ENCODE measurements at regions of chr11 and their contacts with region 1.

Region 1: GRCh38 chr11:36265793-36266628 is 23.2 kb downstream of the COMMD9 start:
- DNase-seq: peak; percentile 59
- H3K4me3 Mint-ChIP-seq: no peak overlapping the region
- H3K27ac Mint-ChIP-seq: no peak overlapping the region
- H3K4me1 Mint-ChIP-seq: peaks cover 1% of the 10 kb centered on the region
- H3K27me3 Mint-ChIP-seq: peaks cover 15% of the 10 kb centered on the region

Region 2: DNA sequence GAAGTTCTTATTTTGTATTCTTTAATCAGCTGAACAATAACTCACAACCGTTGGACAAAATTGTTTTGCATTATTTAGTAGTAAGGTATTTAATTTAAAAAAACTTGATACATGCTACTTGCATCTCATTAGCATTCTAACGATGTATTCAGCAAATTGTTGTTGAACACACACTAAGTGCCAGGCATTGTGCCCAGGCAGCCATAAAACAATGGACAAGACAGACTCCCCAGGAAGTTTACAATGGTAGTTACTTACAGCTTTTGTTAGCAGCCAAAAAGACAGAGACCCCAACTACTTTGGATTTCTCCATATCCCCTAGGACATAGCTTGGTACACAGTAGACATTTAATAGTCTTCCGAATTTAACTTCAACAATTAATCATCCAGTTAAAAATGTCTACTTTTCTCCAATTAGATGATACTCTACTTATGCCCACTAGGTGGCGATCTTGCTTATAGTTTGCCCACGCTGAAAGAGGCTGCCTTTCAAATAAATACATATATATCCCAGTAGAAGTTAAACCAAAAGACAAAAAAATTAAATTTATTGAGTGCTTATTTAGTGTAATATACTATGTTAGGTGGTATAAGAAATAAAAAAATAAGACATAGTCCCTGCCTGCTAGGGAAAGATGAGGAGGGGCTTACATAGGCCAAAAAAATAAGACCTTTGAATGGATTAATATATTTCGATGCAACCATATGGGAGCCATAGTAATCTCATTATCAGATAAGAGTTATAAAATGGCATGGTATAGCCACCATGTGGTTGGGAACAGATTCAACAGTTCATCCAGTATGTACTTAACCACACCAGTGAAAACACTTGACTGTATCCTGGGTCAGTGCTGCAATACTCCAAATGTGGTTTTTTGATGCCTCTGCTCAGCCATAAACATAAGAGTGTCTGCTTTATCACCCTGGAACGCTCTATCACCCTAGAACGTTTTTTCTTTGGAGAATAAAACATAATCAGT is 649.8 kb before region 1 on chr11:
- CTCF ChIA-PET with region 1: interaction called, 12 read pairs
- POLR2A ChIA-PET with region 1: interaction called, 3 read pairs
- DNase-seq: no peak
- H3K4me3 Mint-ChIP-seq: no peak overlapping the region
- H3K27ac Mint-ChIP-seq: no peak overlapping the region
- H3K4me1 Mint-ChIP-seq: peaks cover 8% of the 10 kb centered on the region
- H3K27me3 Mint-ChIP-seq: peaks cover 51% of the 10 kb centered on the region

Region 3: DNA sequence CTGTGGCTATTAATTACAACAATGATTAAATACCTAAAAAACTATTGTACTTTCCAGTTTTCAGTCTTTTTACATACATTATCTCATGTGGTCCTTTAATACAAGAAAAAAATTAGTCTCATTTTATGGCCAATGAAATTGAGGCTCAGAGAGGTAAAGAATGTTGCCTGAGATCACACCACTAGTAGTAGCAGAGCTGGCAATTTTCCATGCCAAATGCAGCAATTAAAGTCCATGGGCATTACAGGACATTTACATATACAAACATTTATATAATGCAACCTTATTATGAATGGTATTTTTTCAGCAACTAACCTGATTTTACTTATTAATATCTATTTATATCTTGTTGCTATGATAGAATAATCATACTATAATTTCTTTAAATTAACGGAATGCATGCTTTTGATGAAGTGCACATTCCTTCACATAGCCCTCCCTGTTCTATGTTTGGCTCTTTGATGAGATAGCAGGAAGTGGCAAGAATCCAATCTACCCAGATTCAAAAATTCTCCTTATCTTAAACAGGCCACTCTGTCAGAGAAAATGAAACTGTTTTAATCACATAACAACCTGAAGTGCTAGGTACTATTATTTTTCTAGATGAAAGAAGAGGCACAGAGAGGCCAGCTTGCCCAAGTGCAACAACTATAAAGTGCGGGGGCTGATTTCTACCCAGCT is 443.1 kb before region 1 on chr11:
- CTCF ChIA-PET with region 1: interaction called, 18 read pairs
- POLR2A ChIA-PET with region 1: no interaction called
- DNase-seq: no peak
- H3K4me3 Mint-ChIP-seq: no peak overlapping the region
- H3K27ac Mint-ChIP-seq: no peak overlapping the region
- H3K4me1 Mint-ChIP-seq: peaks cover 3% of the 10 kb centered on the region
- H3K27me3 Mint-ChIP-seq: no peaks in the 10 kb centered on the region

Region 4: GRCh38 chr11:36041988-36042611 is 223.9 kb before region 1 on chr11:
- CTCF ChIA-PET with region 1: interaction called, 15 read pairs
- POLR2A ChIA-PET with region 1: no interaction called
- DNase-seq: no peak
- H3K4me3 Mint-ChIP-seq: no peak overlapping the region
- H3K27ac Mint-ChIP-seq: no peak overlapping the region
- H3K4me1 Mint-ChIP-seq: no peaks in the 10 kb centered on the region
- H3K27me3 Mint-ChIP-seq: peaks cover 10% of the 10 kb centered on the region

Region 5: GRCh38 chr11:36131721-36132397 is 134.2 kb before region 1 on chr11:
- CTCF ChIA-PET with region 1: no interaction called
- POLR2A ChIA-PET with region 1: no interaction called
- DNase-seq: no peak
- H3K4me3 Mint-ChIP-seq: no peak overlapping the region
- H3K27ac Mint-ChIP-seq: no peak overlapping the region
- H3K4me1 Mint-ChIP-seq: no peaks in the 10 kb centered on the region
- H3K27me3 Mint-ChIP-seq: peaks cover 14% of the 10 kb centered on the region

Region 6: DNA sequence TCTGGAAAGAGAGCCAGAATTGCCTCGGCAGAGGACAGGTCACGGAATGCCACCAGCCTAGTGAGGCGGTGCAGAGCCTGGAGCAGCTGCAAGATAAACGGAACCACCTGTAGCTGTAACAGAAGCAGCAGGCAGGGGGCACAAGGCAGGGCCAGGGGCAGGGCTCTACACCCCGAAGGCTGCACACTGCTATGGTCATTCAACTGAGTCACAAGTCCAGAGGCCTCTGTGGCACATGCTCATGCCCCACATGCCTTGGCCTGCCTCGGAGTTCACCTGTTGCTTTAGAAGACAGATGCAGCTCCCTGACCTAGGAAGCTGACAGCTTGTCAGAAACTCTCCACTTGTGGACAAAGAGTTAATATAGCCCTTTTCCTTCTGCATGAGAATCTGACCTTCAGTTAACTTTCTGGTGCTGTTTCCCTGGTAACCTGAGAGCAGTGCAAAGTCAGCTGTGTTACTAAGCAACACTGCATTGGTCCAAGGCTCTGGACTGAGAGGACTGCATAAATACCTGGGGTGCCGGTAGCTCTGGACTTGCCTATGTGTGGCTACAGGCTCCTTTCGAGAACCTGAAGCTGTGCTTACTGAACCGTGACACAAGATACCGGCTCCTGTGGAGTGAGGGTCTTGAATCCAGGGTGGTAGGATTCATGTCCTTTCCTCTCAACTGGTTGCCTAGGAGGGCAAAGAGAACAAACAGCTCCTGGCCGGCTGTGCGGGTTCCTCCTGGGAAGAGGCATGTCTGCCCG is 12.7 kb after region 1 on chr11:
- CTCF ChIA-PET with region 1: interaction called, 10 read pairs
- POLR2A ChIA-PET with region 1: interaction called, 3 read pairs
- DNase-seq: no peak
- H3K4me3 Mint-ChIP-seq: no peak overlapping the region
- H3K27ac Mint-ChIP-seq: no peak overlapping the region
- H3K4me1 Mint-ChIP-seq: peaks cover 3% of the 10 kb centered on the region
- H3K27me3 Mint-ChIP-seq: no peaks in the 10 kb centered on the region

Region 7: GRCh38 chr11:36289226-36289852 is 23.3 kb after region 1 on chr11 and contains the start of gene COMMD9:
- CTCF ChIA-PET with region 1: interaction called, 3 read pairs
- POLR2A ChIA-PET with region 1: interaction called, 10 read pairs
- DNase-seq: peak; percentile 96
- H3K4me3 Mint-ChIP-seq: peak within 1 kb of the TSS; percentile 87
- H3K27ac Mint-ChIP-seq: peak within 1 kb of the TSS; percentile 64
- H3K4me1 Mint-ChIP-seq: peaks cover 30% of the 10 kb centered on the region
- H3K27me3 Mint-ChIP-seq: no peaks in the 10 kb centered on the region
- total RNA-seq, gene COMMD9: 30.5 to 34.1 TPM

Region 8: GRCh38 chr11:36385121-36385970 is 119.3 kb after region 1 on chr11:
- CTCF ChIA-PET with region 1: no interaction called
- POLR2A ChIA-PET with region 1: no interaction called
- DNase-seq: no peak
- H3K4me3 Mint-ChIP-seq: no peak overlapping the region
- H3K27ac Mint-ChIP-seq: peak overlapping the region; percentile 69
- H3K4me1 Mint-ChIP-seq: peaks cover 66% of the 10 kb centered on the region
- H3K27me3 Mint-ChIP-seq: no peaks in the 10 kb centered on the region